Natural killer cell (primary cell): ENCODE measurements at regions of chr12 and their contacts with region 1.

Region 1: GRCh38 chr12:120686690-120687577 is at the start of gene MLEC:
- DNase-seq: peak; percentile 99
- ATAC-seq: peak; percentile 82 to 92 (median 83)
- H3K4me3 ChIP-seq: peak within 1 kb of the TSS; percentile 58
- H3K4me3 Mint-ChIP-seq: peak within 1 kb of the TSS; percentile 93
- H3K27ac ChIP-seq: peak within 1 kb of the TSS; percentile 80
- H3K27ac Mint-ChIP-seq: peak within 1 kb of the TSS; percentile 90
- H3K4me1 ChIP-seq: peaks cover 40% of the 10 kb centered on the region
- H3K4me1 Mint-ChIP-seq: peaks cover 34 to 42% of the 10 kb centered on the region in 2 donors
- H3K27me3 ChIP-seq: no peaks in the 10 kb centered on the region
- H3K27me3 Mint-ChIP-seq: no peaks in the 10 kb centered on the region
- CTCF ChIP-seq: no peak
- total RNA-seq, gene MLEC: 47.4 to 52.8 (median 49.6) TPM

Region 2: GRCh38 chr12:120725659-120726509 is 39.0 kb after region 1 on chr12 and contains the start of gene ACADS:
- intact Hi-C with region 1: loop called (anchors 1 kb)
- DNase-seq: peak; percentile 91 to 94
- ATAC-seq: peak; percentile 99 to 100 (median 100)
- H3K4me3 ChIP-seq: peak within 1 kb of the TSS; percentile 52
- H3K4me3 Mint-ChIP-seq: peak within 1 kb of the TSS; percentile 91
- H3K27ac ChIP-seq: peak within 1 kb of the TSS; percentile 30
- H3K27ac Mint-ChIP-seq: peak within 1 kb of the TSS; percentile 51 to 88
- H3K4me1 ChIP-seq: peaks cover 15% of the 10 kb centered on the region
- H3K4me1 Mint-ChIP-seq: peaks cover 16 to 28% of the 10 kb centered on the region in 2 donors
- H3K27me3 ChIP-seq: no peaks in the 10 kb centered on the region
- H3K27me3 Mint-ChIP-seq: no peaks in the 10 kb centered on the region
- CTCF ChIP-seq: no peak
- total RNA-seq, gene ACADS: 14.9 to 18.6 (median 15.5) TPM